Posterior vena cava (tissue), 2 donors: ENCODE measurements at regions of chr2 and their contacts with region 1.

Region 1: DNA sequence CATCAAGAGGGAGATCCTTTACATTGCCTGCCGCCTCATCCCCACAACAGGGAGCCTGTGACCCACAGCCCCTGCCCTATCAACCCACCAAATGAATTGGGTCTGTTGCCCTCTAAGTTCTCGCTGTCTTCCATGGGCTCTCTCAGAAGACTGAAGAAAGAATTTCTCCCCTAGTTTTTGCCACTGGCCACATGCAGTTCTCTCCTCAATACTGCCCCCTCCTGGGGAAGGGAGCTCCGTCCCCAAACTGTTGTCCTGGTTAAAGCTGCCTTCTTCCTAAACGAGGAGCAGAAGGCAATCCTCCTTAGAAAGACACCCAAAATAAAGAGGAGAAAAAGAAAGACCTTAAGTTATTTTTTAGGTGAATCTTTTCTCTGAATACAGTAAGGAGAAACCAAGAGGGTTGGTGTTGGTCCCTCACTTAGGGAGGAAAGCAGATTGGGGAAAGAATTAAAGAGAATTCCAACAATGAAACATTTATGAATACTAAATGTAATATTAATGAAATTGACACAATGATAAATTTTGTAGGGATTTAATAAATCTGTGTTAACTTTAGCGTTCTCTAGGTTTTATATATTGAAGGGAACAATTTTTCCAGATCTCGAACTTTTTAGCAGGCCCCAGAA is 31.1 kb upstream of the SATB2 start:
- DNase-seq: no peak

Region 2: GRCh38 chr2:198309673-198310280 is 1179.1 kb before region 1 on chr2:
- intact Hi-C with region 1: loop called in 1 of 2 experiments (anchors 10 kb)
- DNase-seq: no peak

Region 3: DNA sequence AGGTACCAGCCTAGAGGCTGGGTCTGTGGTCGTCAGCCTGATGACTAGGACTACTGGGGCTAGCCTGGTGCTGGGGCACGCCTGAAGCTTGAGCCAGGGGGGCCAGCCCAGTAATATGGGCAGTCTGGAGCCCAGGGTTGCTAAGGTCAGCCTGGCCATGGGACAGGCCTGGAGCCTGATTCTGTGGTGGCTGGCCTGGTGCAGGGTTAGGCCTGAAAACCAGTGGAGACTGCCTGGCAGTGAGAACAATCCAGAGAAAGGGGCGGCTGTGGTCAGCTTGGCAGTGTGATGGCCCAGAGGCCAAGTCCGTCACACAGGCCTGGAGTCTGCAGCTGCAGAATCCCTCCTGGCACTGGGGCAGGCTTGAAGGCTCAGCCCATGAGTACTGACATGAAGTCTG is 477.0 kb before region 1 on chr2:
- intact Hi-C with region 1: loop called in 1 of 2 experiments (anchors 10 kb)
- DNase-seq: no peak